GM12878 (cell line): ENCODE measurements at regions of chr7 and their contacts with region 1.

Region 1: DNA sequence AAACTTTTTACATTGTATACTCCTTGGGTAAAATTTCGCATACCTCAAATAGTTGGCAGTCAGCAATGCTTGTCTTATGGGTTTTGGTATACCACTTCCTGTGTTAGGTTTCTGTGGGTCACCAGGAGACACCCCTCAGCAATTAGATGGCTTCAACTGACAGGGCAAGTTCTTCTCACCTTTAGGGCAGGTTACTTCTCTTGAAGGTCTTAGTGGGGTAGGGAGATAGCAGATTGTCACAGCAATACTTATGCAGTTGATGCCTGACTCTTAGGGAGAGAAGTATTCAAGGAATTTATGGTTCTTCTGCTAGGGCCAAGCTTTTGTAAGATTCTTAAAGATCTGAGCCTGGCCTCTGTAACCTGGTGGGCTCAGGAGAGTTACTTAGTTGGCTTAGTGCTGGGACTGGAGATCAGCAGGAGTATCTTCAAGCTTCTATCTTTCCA is 42.9 kb downstream of the MKLN1 start:
- DNase-seq: peak; percentile 48
- ATAC-seq: peak; percentile 94
- H3K4me3 ChIP-seq: no peak overlapping the region
- H3K27ac ChIP-seq: no peak overlapping the region
- H3K4me1 ChIP-seq: peaks cover 10% of the 10 kb centered on the region; the same call in 1 of the 2 replicates
- H3K27me3 ChIP-seq: no peaks in the 10 kb centered on the region
- CTCF ChIP-seq: no peak
- EP300 ChIP-seq: 0 out of 4 replicates have a peak, but pooled peaks of 1 of the 2 experiments have one; percentile 16
- POLR2A ChIP-seq: no peak
- RAD21 ChIP-seq: no peak

Region 2: GRCh38 chr7:131355921-131356777 is 14.4 kb before region 1 on chr7:
- CTCF ChIA-PET with region 1: no interaction called
- POLR2A ChIA-PET with region 1: no interaction called
- RAD21 ChIA-PET with region 1: no interaction called
- SMC1A ChIA-PET with region 1: interaction called, 18 read pairs
- in situ Hi-C with region 1: no loop called
- intact Hi-C with region 1: no loop called
- DNase-seq: no peak
- ATAC-seq: no peak
- H3K4me3 ChIP-seq: no peak overlapping the region
- H3K27ac ChIP-seq: no peak overlapping the region
- H3K4me1 ChIP-seq: 0 out of 2 replicates have a peak, but pooled peaks cover 3% of the 10 kb centered on the region
- H3K27me3 ChIP-seq: no peaks in the 10 kb centered on the region
- CTCF ChIP-seq: no peak
- EP300 ChIP-seq: no peak
- POLR2A ChIP-seq: no peak
- RAD21 ChIP-seq: no peak